ENCODE measurements at regions of chr7 and their contacts with region 1.

Region 1: GRCh38 chr7:131501422-131501821 is 55.0 kb downstream of the PODXL start:
- DNase-seq: peak; percentile 45 to 69 (median 51)
- H3K4me3 ChIP-seq: no peak overlapping the region
- H3K4me3 Mint-ChIP-seq: peak overlapping the region in 4 of 8 donors; percentile 3 to 35 (median 24)
- H3K27ac ChIP-seq: no peak overlapping the region
- H3K27ac Mint-ChIP-seq: peak overlapping the region; percentile 17 to 92 (median 76)
- H3K4me1 ChIP-seq: peaks cover 23% of the 10 kb centered on the region
- H3K4me1 Mint-ChIP-seq: peaks cover 20 to 33% (median 23%) of the 10 kb centered on the region in 4 donors
- H3K27me3 ChIP-seq: no peaks in the 10 kb centered on the region
- H3K27me3 Mint-ChIP-seq: no peaks in the 10 kb centered on the region

Region 2: GRCh38 chr7:131513245-131514061 is 12.0 kb after region 1 on chr7:
- CTCF ChIA-PET with region 1: interaction called, 79 read pairs
- POLR2A ChIA-PET with region 1: interaction called, 3 read pairs
- intact Hi-C with region 1: no loop called
- DNase-seq: peak; percentile 61 to 70 (median 63)
- H3K4me3 ChIP-seq: no peak overlapping the region
- H3K4me3 Mint-ChIP-seq: peak overlapping the region in 4 of 8 donors; percentile 32 to 63 (median 57)
- H3K27ac ChIP-seq: no peak overlapping the region
- H3K27ac Mint-ChIP-seq: peak overlapping the region in 2 of 7 donors; percentile 43 to 68
- H3K4me1 ChIP-seq: peaks cover 6% of the 10 kb centered on the region
- H3K4me1 Mint-ChIP-seq: peaks cover 12 to 17% (median 15%) of the 10 kb centered on the region in 4 donors
- H3K27me3 ChIP-seq: no peaks in the 10 kb centered on the region
- H3K27me3 Mint-ChIP-seq: peaks cover 0 to 4% of the 10 kb centered on the region in 2 donors

Region 3: DNA sequence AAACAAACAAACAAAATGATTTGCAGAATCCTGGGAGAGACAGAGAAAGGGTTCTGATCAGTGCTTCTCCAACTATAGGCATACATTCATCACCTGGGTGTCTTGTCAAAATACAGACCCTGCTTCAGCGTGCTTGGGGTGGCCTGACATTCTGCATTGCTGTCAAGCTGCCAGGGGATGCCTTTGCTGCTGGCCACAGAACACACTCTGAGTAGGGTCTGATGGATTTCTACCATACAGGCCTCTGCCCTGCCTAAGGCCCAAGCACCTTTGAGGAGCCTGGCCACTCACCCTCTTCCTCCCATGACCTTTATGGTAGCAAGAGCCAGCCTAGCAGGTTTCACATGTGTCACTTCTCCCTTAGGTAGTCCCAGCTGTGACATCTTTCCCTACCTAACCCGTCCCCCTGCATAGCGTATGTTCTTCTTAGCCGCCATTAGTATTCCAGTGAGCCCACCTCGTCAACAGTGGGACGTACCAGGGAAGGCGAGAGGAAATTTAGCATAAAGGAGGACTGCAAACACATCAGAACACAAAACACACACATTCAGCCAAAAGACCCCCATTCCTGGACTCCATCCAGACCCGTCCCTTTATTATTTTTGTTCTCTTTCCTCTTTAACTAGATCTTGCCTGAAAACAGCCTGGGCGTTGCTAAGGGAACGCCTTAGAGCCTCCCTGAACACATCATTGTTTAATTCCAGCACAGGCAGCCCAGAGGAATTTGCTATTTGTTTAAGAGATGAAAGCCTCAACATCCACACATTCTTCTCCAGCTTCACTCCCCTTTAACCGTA is 98.9 kb after region 1 on chr7:
- CTCF ChIA-PET with region 1: no interaction called
- POLR2A ChIA-PET with region 1: no interaction called
- intact Hi-C with region 1: no loop called
- DNase-seq: no peak
- H3K4me3 ChIP-seq: no peak overlapping the region
- H3K4me3 Mint-ChIP-seq: no peak overlapping the region
- H3K27ac ChIP-seq: no peak overlapping the region
- H3K27ac Mint-ChIP-seq: no peak overlapping the region
- H3K4me1 ChIP-seq: no peaks in the 10 kb centered on the region
- H3K4me1 Mint-ChIP-seq: no peaks in the 10 kb centered on the region
- H3K27me3 ChIP-seq: no peaks in the 10 kb centered on the region
- H3K27me3 Mint-ChIP-seq: peaks cover 8% of the 10 kb centered on the region in 2 donors